Posterior vena cava (tissue), 2 donors: ENCODE measurements at regions of chr12 and their contacts with region 1.

Region 1: GRCh38 chr12:51210690-51211395 is 7.0 kb downstream of the POU6F1 start:
- DNase-seq: peak; percentile 10

Region 2: GRCh38 chr12:49588721-49589516 is 1621.9 kb before region 1 on chr12:
- intact Hi-C with region 1: loop called in 1 of 2 experiments (anchors 5 kb)
- DNase-seq: no peak